ENCODE measurements at regions of chr7 and their contacts with region 1.

Region 1: DNA sequence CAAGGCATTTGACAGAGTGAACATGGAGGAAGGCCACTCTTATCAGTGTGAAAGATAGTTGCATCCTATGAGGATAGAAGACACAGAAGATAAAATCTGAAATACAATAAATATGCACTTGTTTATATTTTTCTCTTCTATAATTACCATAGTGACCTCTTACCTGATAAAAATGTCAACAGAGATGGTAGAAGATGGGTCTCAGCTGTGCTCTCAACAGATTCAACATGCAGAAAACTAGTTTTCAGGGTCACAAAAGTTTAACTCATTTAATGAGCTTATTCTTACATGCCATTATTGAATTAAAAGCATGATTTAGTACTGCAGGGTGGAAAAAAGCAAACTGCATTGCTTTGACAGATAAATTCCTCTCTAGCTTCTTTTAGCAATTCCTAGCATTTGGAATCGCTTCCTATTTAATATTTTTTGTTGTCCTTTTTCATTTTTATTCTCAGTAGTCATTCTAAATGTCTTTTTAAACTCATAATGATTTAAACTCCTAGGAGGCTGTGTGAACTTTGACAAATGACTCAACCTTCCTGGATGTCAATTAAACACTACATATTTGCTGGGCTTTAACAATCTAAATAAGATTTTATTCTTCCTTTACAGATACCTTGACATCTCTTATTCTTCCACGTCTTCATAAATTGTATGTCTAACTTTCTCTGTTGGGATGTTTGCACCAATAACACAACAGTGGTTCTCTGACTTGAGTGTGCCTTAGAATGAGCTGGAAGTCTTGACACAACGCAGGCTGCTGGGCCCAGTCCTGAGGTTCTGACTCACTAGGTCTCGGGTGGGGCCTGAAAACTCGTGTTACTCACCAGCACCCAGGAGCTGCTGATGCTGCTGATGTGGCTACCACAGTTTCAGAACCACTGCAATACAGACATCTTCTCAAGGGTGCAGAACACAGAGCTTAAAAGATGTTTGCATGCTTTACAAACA is 565.5 kb upstream of the IGFBP3 start:
- DNase-seq: peak; percentile 81 to 85
- ATAC-seq: no peak
- H3K4me3 ChIP-seq: no peak overlapping the region
- H3K27ac ChIP-seq: no peak overlapping the region
- H3K4me1 ChIP-seq: no peaks in the 10 kb centered on the region
- H3K27me3 ChIP-seq: no peaks in the 10 kb centered on the region

Region 2: GRCh38 chr7:46459942-46460341 is 26.6 kb before region 1 on chr7:
- intact Hi-C with region 1: loop called in 1 of 2 experiments (anchors 2 kb)
- DNase-seq: no peak
- ATAC-seq: no peak
- H3K4me3 ChIP-seq: no peak overlapping the region
- H3K27ac ChIP-seq: no peak overlapping the region
- H3K4me1 ChIP-seq: peaks cover 0 to 4% of the 10 kb centered on the region in 2 donors
- H3K27me3 ChIP-seq: no peaks in the 10 kb centered on the region

Region 3: GRCh38 chr7:46534664-46535588 is 48.4 kb after region 1 on chr7:
- intact Hi-C with region 1: no loop called
- DNase-seq: no peak
- ATAC-seq: no peak
- H3K4me3 ChIP-seq: no peak overlapping the region
- H3K27ac ChIP-seq: no peak overlapping the region
- H3K4me1 ChIP-seq: no peaks in the 10 kb centered on the region
- H3K27me3 ChIP-seq: no peaks in the 10 kb centered on the region

Measured in aorta (tissue), 5 donors.